Activated CD4-positive, alpha-beta memory T cell treated with anti-CD3 and anti-CD28 coated beads for 36 hours (primary cell): ENCODE measurements at regions of chr12 and their contacts with region 1.

Region 1: DNA sequence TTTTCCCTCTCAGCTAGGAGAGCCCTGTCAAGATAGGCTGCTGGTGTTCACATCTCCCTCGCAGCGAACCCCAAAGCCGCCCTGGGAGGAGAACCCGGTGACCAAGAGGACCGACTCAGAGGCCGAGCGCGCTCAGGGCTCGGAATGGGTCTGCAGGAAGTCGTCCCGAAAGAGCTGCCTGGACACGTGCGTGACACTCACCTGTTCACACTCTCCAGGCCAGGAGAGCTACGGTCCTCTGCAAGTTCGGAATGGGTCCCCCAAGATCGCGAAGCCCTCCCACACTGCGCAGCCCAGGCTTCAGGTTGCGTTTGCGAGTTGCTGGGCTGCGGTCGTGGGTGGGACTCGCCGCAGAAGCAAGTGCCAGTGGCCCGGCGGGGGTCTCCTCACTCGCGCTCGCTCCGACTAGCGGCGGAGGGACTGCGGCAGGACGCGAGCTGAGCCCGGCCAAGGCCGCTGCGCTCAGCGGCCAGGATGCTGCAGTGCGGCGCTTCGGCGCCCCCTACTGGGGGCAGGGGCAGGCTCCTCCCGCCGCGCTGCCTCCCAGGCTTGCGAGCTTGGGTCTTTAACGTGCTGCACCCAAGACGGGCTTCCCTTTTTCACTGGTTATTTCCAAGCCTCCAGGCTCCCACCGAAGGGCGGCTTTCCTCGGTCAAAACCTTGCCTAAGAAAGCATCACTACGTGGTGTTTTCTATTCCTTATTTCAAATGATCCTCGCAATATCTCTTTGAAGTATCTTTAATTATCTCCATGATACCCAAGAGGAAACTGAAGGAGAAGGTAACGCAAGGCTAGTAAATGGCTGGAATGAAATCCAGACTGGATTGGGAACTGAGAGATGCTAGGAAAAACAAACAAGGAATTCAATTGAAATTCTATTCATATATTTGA is at the start of gene RERG:
- DNase-seq: peak; percentile 79
- H3K4me3 Mint-ChIP-seq: peak within 1 kb of the TSS; percentile 55
- H3K27ac Mint-ChIP-seq: no peak within 1 kb of the TSS
- H3K4me1 Mint-ChIP-seq: no peaks in the 10 kb centered on the region
- H3K27me3 Mint-ChIP-seq: peaks cover 19% of the 10 kb centered on the region
- total RNA-seq, gene RERG: not detected

Region 2: GRCh38 chr12:14723763-14724162 is 497.5 kb before region 1 on chr12:
- CTCF ChIA-PET with region 1: interaction called, 19 read pairs
- POLR2A ChIA-PET with region 1: no interaction called
- intact Hi-C with region 1: loop called (anchors 2 kb)
- DNase-seq: peak; percentile 65
- H3K4me3 Mint-ChIP-seq: no peak overlapping the region
- H3K27ac Mint-ChIP-seq: no peak overlapping the region
- H3K4me1 Mint-ChIP-seq: no peaks in the 10 kb centered on the region
- H3K27me3 Mint-ChIP-seq: peaks cover 2% of the 10 kb centered on the region

Region 3: DNA sequence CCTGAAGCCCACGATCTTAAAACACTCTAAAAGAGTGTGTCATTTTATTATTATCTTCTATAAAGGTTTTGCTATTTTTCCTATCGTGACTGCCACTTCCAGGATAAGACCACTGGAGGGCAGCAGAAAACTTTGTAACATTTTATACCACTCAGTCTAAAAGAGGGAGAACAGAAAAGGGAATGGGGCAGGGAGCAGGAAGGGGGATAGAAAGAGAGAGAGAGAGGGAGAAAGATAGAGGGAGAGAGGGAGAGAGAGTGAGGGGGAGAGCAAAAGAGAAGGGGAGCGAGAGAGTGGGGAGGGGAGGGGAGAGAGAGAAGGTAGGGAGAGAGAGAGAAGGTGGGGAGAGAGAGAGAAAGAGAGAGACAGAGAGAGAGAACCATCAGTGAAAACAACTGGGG is 375.9 kb before region 1 on chr12:
- CTCF ChIA-PET with region 1: interaction called, 10 read pairs
- POLR2A ChIA-PET with region 1: no interaction called
- intact Hi-C with region 1: loop called (anchors 2 kb)
- DNase-seq: peak; percentile 43
- H3K4me3 Mint-ChIP-seq: no peak overlapping the region
- H3K27ac Mint-ChIP-seq: no peak overlapping the region
- H3K4me1 Mint-ChIP-seq: no peaks in the 10 kb centered on the region
- H3K27me3 Mint-ChIP-seq: no peaks in the 10 kb centered on the region

Region 4: DNA sequence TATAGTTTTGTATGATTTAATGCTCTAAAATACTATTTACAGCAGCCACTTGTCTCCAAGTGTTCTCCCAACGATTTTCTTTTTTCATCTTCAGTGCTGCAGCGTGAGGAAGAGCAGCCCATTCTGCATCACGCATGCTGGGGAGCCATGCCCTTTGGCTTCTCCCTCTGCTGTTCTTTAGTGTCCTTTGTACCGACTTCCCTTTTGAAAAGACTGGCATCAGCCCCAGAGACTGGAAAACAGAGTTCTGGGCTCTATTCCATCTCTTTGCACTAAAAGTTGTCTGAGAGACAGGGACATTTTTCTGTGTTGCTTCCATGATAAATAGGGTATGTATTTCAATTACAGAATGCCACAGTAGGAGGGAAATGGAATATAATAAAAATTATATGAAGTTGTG is 105.2 kb before region 1 on chr12:
- CTCF ChIA-PET with region 1: no interaction called
- POLR2A ChIA-PET with region 1: no interaction called
- intact Hi-C with region 1: no loop called
- DNase-seq: no peak
- H3K4me3 Mint-ChIP-seq: no peak overlapping the region
- H3K27ac Mint-ChIP-seq: no peak overlapping the region
- H3K4me1 Mint-ChIP-seq: no peaks in the 10 kb centered on the region
- H3K27me3 Mint-ChIP-seq: peaks cover 4% of the 10 kb centered on the region

Region 5: GRCh38 chr12:15151161-15152120 is 69.8 kb before region 1 on chr12:
- CTCF ChIA-PET with region 1: interaction called, 19 read pairs
- POLR2A ChIA-PET with region 1: no interaction called
- intact Hi-C with region 1: loop called (anchors 1 kb)
- DNase-seq: no peak
- H3K4me3 Mint-ChIP-seq: no peak overlapping the region
- H3K27ac Mint-ChIP-seq: no peak overlapping the region
- H3K4me1 Mint-ChIP-seq: no peaks in the 10 kb centered on the region
- H3K27me3 Mint-ChIP-seq: peaks cover 8% of the 10 kb centered on the region

Region 6: GRCh38 chr12:15181017-15181683 is 40.1 kb before region 1 on chr12:
- CTCF ChIA-PET with region 1: interaction called, 4 read pairs
- POLR2A ChIA-PET with region 1: no interaction called
- intact Hi-C with region 1: loop called (anchors 2 kb)
- DNase-seq: no peak
- H3K4me3 Mint-ChIP-seq: no peak overlapping the region
- H3K27ac Mint-ChIP-seq: no peak overlapping the region
- H3K4me1 Mint-ChIP-seq: no peaks in the 10 kb centered on the region
- H3K27me3 Mint-ChIP-seq: peaks cover 5% of the 10 kb centered on the region

Region 7: DNA sequence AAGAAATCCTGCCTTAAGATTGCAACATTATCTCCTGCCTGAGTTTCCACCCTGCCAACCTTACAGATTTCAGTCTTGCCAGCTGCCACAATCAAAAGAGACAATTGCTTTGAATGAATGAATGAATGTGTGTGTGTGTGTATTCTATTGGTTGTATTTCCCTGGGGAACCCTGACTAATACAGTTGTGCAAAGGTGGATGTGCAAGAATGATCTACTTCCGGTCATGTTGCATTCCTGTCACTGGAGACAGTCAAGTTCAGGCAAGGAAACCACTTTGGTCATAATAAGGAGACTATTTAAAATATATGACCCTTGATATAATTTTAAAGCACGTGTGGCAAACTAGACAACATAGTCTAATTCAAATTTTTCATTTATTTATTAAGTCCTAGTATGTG is 13.1 kb before region 1 on chr12:
- CTCF ChIA-PET with region 1: interaction called, 47 read pairs
- POLR2A ChIA-PET with region 1: no interaction called
- intact Hi-C with region 1: no loop called
- DNase-seq: no peak
- H3K4me3 Mint-ChIP-seq: no peak overlapping the region
- H3K27ac Mint-ChIP-seq: no peak overlapping the region
- H3K4me1 Mint-ChIP-seq: no peaks in the 10 kb centered on the region
- H3K27me3 Mint-ChIP-seq: peaks cover 7% of the 10 kb centered on the region

Region 8: GRCh38 chr12:15268927-15269552 is 47.8 kb after region 1 on chr12:
- CTCF ChIA-PET with region 1: interaction called, 15 read pairs
- POLR2A ChIA-PET with region 1: no interaction called
- intact Hi-C with region 1: no loop called
- DNase-seq: peak; percentile 45
- H3K4me3 Mint-ChIP-seq: no peak overlapping the region
- H3K27ac Mint-ChIP-seq: no peak overlapping the region
- H3K4me1 Mint-ChIP-seq: no peaks in the 10 kb centered on the region
- H3K27me3 Mint-ChIP-seq: peaks cover 2% of the 10 kb centered on the region

Region 9: GRCh38 chr12:15650399-15651128 is 429.3 kb after region 1 on chr12:
- CTCF ChIA-PET with region 1: no interaction called
- POLR2A ChIA-PET with region 1: no interaction called
- intact Hi-C with region 1: no loop called
- DNase-seq: no peak
- H3K4me3 Mint-ChIP-seq: no peak overlapping the region
- H3K27ac Mint-ChIP-seq: no peak overlapping the region
- H3K4me1 Mint-ChIP-seq: no peaks in the 10 kb centered on the region
- H3K27me3 Mint-ChIP-seq: no peaks in the 10 kb centered on the region